ENCODE measurements at regions of chr1 and their contacts with region 1.

Region 1: DNA sequence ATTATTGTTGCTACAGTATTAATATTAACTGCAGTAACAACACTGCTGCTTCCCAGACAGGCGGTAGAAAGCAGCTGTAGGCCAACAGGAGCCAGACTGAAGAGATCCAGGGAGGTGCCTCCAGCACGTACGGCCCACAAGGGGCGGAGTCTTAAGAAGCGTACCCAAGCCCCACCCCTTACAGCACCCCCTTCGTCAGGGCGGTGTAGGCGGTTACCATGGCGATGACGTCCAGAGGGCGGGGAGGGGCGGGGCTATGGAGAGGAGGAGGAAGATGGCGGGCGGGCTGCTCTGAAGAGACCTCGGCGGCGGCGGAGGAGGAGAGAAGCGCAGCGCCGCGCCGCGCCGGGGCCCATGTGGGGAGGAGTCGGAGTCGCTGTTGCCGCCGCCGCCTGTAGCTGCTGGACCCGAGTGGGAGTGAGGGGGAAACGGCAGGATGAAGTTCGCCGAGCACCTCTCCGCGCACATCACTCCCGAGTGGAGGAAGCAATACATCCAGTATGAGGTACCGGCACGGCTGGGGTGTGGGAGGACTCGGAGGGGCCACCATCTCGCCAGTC is at the start of gene XPR1:
- DNase-seq: peak; percentile 100
- H3K4me3 ChIP-seq: peak within 1 kb of the TSS; percentile 87 to 99 (median 95)
- H3K27ac ChIP-seq: peak within 1 kb of the TSS; percentile 90 to 96 (median 96)
- H3K4me1 ChIP-seq: peaks cover 33 to 47% (median 39%) of the 10 kb centered on the region in 4 donors
- H3K27me3 ChIP-seq: no peaks in the 10 kb centered on the region
- CTCF ChIP-seq: peak; percentile 11 to 55 (median 47)
- EP300 ChIP-seq: no peak
- POLR2A ChIP-seq: peak; percentile 74
- total RNA-seq, gene XPR1: 15.8 to 26.7 (median 22.8) TPM

Region 2: GRCh38 chr1:180533266-180533987 is 98.4 kb before region 1 on chr1:
- intact Hi-C with region 1: loop called (anchors 5 kb)
- DNase-seq: no peak
- H3K4me3 ChIP-seq: no peak overlapping the region
- H3K27ac ChIP-seq: no peak overlapping the region
- H3K4me1 ChIP-seq: peaks cover 4 to 9% (median 5%) of the 10 kb centered on the region in 4 donors
- H3K27me3 ChIP-seq: no peaks in the 10 kb centered on the region
- CTCF ChIP-seq: peak; percentile 81 to 87 (median 84)
- EP300 ChIP-seq: no peak
- POLR2A ChIP-seq: no peak

Region 3: GRCh38 chr1:180652792-180653191 is 20.9 kb after region 1 on chr1:
- intact Hi-C with region 1: no loop called
- DNase-seq: no peak
- H3K4me3 ChIP-seq: no peak overlapping the region
- H3K27ac ChIP-seq: no peak overlapping the region
- H3K4me1 ChIP-seq: no peaks in the 10 kb centered on the region
- H3K27me3 ChIP-seq: no peaks in the 10 kb centered on the region
- CTCF ChIP-seq: no peak
- EP300 ChIP-seq: no peak
- POLR2A ChIP-seq: no peak